ENCODE measurements at regions of chr19 and their contacts with region 1.

Region 1: DNA sequence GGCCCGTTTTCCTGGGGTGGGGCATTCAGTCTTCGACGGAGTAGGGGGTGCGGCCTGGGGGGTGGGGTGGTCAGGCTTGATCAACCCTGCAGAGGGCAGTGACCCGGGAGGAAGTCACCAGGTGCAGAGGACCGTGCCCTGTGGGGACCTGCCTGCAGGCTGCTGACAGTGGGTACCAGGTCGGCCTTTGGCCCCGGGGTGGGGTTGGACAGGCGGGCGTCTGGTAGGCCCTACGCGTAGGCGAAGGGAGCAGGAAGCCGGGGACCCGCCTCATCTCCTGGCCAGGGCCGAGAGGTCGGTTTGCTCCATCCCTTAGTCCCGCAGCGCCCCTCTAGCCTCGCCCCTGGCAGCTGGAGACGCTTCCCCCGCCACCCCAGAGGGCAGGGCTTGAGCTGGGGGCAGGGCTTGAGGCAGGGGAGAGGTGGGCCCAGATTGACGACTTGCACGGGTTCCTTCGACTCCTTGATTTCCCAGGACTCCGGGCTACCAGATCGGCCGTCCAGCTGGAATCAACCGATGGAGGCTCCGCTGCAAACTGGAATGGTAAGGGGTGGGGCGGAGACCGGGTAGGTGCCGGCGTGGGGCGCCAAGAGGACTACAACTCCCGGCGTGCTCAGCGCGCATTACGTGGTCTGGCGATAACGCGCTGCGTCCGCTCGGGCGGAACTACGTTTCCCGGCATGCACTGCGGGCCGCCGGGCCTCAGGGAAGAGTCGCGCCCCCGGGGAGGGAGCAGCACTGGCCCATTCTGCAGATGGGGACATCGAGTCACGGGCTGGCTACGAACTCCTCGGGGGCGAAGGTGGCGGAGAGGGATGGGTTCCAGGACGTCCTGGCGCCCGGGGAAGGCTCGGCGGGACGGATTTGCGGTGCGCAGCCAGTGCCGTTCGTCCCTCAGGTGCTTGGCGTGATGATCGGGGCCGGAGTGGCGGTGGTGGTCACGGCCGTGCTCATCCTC is at the start of gene PNPLA6:
- DNase-seq: peak; percentile 84 to 89 (median 85)
- H3K4me3 ChIP-seq: peak within 1 kb of the TSS; percentile 60 to 99 (median 99)
- H3K4me3 Mint-ChIP-seq: peak within 1 kb of the TSS; percentile 89 to 94
- H3K27ac ChIP-seq: peak within 1 kb of the TSS; percentile 81 to 88
- H3K27ac Mint-ChIP-seq: peak within 1 kb of the TSS; percentile 83 to 95 (median 91)
- H3K4me1 ChIP-seq: peaks cover 32 to 43% of the 10 kb centered on the region in 2 donors
- H3K4me1 Mint-ChIP-seq: peaks cover 36% of the 10 kb centered on the region
- H3K27me3 ChIP-seq: no peaks in the 10 kb centered on the region
- H3K27me3 Mint-ChIP-seq: peaks cover 0 to 5% (median 2%) of the 10 kb centered on the region in 3 donors
- CTCF ChIP-seq: no peak
- polyA plus RNA-seq, gene PNPLA6: 11.2 to 178 (median 14.4) TPM

Region 2: DNA sequence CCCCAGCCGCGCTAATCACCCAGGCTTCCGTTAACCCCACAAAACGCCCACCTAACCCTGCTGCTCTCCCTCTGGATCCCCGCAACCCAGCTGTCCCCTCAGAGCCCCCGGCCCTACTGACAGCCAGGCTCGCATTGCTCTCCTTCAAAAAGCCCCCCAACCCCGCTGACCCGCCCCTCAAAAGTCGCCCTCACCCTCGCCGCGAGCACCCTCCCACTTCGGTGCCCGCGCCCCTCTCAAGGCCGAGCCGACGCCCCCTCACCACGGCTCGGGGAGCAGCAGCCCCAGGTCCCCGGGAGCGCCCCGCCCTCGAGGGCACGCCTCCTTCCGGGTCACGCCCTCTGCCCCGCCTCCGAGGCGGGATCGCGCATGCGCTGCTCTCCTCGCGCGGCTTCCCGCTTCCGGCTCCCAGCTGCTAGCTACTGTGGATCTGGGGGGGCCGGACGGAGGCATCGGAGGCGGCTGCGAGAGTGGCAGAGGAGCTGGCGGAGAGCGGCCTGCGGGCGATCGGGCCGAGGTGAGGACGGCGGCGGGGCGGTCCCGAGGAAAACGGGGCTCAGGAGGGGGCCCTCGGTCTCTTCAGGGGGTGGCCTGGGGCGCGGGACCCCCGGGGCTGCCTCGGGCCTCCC is 140.5 kb before region 1 on chr19:
- intact Hi-C with region 1: loop called (anchors 10 kb)
- DNase-seq: peak; percentile 81 to 86 (median 84)
- H3K4me3 ChIP-seq: peak overlapping the region; percentile 81 to 84 (median 83)
- H3K4me3 Mint-ChIP-seq: peak overlapping the region; percentile 87 to 93
- H3K27ac ChIP-seq: peak overlapping the region; percentile 28 to 76
- H3K27ac Mint-ChIP-seq: peak overlapping the region; percentile 23 to 93 (median 86)
- H3K4me1 ChIP-seq: peaks cover 31 to 37% of the 10 kb centered on the region in 2 donors
- H3K4me1 Mint-ChIP-seq: peaks cover 38% of the 10 kb centered on the region
- H3K27me3 ChIP-seq: no peaks in the 10 kb centered on the region
- H3K27me3 Mint-ChIP-seq: no peaks in the 10 kb centered on the region
- CTCF ChIP-seq: no peak

Region 3: DNA sequence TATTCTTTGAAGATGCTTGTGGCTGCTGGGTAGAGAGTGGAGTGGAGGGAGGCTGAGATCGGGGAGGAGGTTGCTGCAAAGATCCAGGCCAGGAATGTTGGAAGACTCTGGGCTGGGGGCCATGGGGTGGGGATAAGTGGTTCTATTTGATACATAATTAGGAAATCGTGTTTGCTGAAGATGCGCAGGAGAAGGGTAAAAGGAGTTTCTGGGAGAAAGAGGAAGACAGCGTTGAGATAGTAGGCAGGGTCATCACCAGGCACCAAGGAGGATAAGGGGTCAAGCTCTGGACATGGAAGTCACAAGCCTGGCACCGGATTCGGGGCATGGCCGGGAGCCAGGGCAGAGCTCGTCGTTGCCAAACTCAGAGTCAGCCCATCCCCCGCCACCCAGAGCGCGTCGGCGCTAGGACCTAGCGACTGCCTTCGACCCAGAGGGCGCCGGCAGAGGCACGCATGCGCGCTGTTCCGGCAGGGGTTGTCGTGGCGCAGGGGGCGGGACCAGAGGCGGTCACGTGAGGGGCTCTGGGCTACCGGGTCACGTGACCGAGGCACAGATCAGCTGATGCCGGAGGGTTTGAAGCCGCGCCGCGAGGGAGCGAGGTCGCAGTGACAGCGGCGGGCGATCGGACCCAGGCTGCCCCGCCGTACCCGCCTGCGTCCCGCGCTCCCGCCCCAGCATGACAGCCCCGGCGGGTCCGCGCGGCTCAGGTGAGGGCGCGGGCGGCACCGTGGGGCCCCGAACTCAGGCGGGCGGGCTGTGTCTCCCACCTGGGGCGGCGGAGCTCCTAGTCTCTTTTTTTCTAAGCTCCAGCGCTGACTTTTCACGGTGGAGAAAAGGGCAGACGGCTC is 13.0 kb before region 1 on chr19 and contains the start of gene MCOLN1:
- intact Hi-C with region 1: loop called in 1 of 2 experiments (anchors 1 kb)
- DNase-seq: peak; percentile 98 to 99 (median 98)
- H3K4me3 ChIP-seq: peak within 1 kb of the TSS; percentile 56 to 89 (median 69)
- H3K4me3 Mint-ChIP-seq: peak within 1 kb of the TSS; percentile 85 to 89
- H3K27ac ChIP-seq: peak within 1 kb of the TSS; percentile 25 to 77
- H3K27ac Mint-ChIP-seq: peak within 1 kb of the TSS; percentile 67 to 92 (median 90)
- H3K4me1 ChIP-seq: peaks cover 23 to 30% of the 10 kb centered on the region in 2 donors
- H3K4me1 Mint-ChIP-seq: peaks cover 26% of the 10 kb centered on the region
- H3K27me3 ChIP-seq: no peaks in the 10 kb centered on the region
- H3K27me3 Mint-ChIP-seq: peaks cover 6 to 9% (median 7%) of the 10 kb centered on the region in 3 donors
- CTCF ChIP-seq: no peak
- polyA plus RNA-seq, gene MCOLN1: 32.8 to 133 (median 34.3) TPM

Region 4: GRCh38 chr19:7562646-7563393 is 27.5 kb after region 1 on chr19:
- intact Hi-C with region 1: no loop called
- DNase-seq: no peak
- H3K4me3 ChIP-seq: no peak overlapping the region
- H3K4me3 Mint-ChIP-seq: no peak overlapping the region
- H3K27ac ChIP-seq: no peak overlapping the region
- H3K27ac Mint-ChIP-seq: no peak overlapping the region
- H3K4me1 ChIP-seq: peaks cover 0 to 5% of the 10 kb centered on the region in 2 donors
- H3K4me1 Mint-ChIP-seq: peaks cover 10% of the 10 kb centered on the region
- H3K27me3 ChIP-seq: no peaks in the 10 kb centered on the region
- H3K27me3 Mint-ChIP-seq: peaks cover 0 to 5% (median 2%) of the 10 kb centered on the region in 3 donors
- CTCF ChIP-seq: no peak

Measured in CD14-positive monocyte (primary cell).